Posterior cingulate gyrus (tissue), 11 donors: ENCODE measurements at regions of chr12 and their contacts with region 1.

Region 1: GRCh38 chr12:48197971-48198671 is 5.0 kb downstream of the OR10AD1 start:
- DNase-seq: peak; percentile 83 to 99 (median 94)

Region 2: DNA sequence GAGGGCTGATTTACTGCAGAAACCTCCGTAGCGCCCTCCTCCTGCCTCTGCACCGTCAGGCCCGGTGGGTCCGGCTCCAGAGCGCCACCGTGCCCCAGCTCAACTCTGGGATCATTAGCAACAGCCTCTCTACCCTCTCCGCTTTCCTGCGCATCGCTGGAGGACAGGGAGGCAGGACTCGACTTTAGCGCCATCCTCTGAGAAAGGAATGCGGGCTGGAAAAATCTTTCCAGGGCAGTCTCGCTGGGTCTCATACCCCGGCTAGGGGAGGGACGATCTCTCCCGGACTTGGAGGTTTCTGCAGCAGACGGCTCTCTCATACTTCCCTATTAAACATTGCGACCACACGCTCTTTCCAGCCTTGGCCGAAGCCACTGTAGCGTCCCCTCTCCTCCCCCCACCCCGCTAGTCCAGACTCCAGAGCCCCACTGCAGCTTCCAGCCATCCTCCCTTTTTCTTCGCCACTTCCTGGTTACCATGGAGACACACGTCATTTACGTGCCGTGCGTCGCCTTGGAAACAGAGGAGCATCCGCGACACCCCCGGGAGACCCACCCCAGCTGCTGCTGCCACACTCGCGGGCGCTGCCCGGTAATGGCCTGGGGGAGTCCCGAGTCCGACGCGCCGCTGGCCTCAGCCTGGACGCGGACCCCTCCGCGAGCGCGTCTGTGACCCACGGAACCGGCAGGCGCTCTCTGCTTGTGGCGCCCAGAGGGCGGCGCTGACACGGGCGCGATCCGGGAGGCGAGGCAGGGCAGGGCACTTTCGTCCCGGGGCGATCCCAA is 14.8 kb before region 1 on chr12 and contains the start of gene CCDC184:
- intact Hi-C with region 1: no loop called
- DNase-seq: peak; percentile 60 to 97 (median 84)

Region 3: GRCh38 chr12:48350249-48351021 is 152.3 kb after region 1 on chr12 and contains the start of gene ZNF641:
- intact Hi-C with region 1: loop called (anchors 5 kb)
- DNase-seq: peak in 9 of 10 donors; percentile 62 to 97 (median 77)